ENCODE measurements at regions of chr9 and their contacts with region 1.

Region 1: GRCh38 chr9:133673258-133673655 is 37.1 kb downstream of the DBH start:
- DNase-seq: no peak
- H3K4me3 ChIP-seq: no peak overlapping the region
- H3K27ac ChIP-seq: no peak overlapping the region
- H3K4me1 ChIP-seq: no peaks in the 10 kb centered on the region
- H3K27me3 ChIP-seq: no peaks in the 10 kb centered on the region
- CTCF ChIP-seq: no peak

Region 2: DNA sequence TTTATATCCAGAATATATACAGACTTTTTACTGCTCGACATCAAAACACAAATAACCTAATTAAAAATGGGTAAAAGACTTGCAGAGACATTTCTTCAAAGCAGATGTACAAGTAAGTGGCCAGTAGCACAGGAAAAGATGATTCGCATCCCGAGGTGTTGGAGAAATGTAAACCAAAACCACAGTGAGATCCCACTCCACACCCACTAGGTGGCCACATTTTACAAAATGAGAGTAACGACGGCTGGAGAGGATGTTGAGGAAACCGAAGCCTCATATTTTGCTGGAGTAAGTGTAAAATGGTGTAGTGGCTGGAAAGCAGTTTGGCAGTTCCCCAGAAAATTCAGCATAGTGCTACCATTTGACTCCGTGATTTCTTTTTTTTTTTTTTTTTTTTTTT is 488.3 kb before region 1 on chr9:
- CTCF ChIA-PET with region 1: no interaction called
- dilution Hi-C with region 1: no loop called
- in situ Hi-C with region 1: no loop called
- intact Hi-C with region 1: no loop called
- DNase-seq: peak; percentile 75
- H3K4me3 ChIP-seq: no peak overlapping the region
- H3K27ac ChIP-seq: no peak overlapping the region
- H3K4me1 ChIP-seq: no peaks in the 10 kb centered on the region
- H3K27me3 ChIP-seq: peaks cover 2% of the 10 kb centered on the region
- CTCF ChIP-seq: peak; percentile 63 to 76

Region 3: GRCh38 chr9:133572821-133573361 is 100.4 kb before region 1 on chr9:
- CTCF ChIA-PET with region 1: no interaction called
- dilution Hi-C with region 1: no loop called
- in situ Hi-C with region 1: no loop called
- intact Hi-C with region 1: no loop called
- DNase-seq: no peak
- H3K4me3 ChIP-seq: no peak overlapping the region
- H3K27ac ChIP-seq: no peak overlapping the region
- H3K4me1 ChIP-seq: no peaks in the 10 kb centered on the region
- H3K27me3 ChIP-seq: peaks cover 5% of the 10 kb centered on the region
- CTCF ChIP-seq: no peak

Region 4: GRCh38 chr9:133584559-133585476 is 88.4 kb before region 1 on chr9:
- CTCF ChIA-PET with region 1: no interaction called
- dilution Hi-C with region 1: loop called (anchors 5 kb)
- in situ Hi-C with region 1: no loop called
- intact Hi-C with region 1: no loop called
- DNase-seq: no peak
- H3K4me3 ChIP-seq: no peak overlapping the region
- H3K27ac ChIP-seq: no peak overlapping the region
- H3K4me1 ChIP-seq: no peaks in the 10 kb centered on the region
- H3K27me3 ChIP-seq: peaks cover 3% of the 10 kb centered on the region
- CTCF ChIP-seq: no peak

Region 5: DNA sequence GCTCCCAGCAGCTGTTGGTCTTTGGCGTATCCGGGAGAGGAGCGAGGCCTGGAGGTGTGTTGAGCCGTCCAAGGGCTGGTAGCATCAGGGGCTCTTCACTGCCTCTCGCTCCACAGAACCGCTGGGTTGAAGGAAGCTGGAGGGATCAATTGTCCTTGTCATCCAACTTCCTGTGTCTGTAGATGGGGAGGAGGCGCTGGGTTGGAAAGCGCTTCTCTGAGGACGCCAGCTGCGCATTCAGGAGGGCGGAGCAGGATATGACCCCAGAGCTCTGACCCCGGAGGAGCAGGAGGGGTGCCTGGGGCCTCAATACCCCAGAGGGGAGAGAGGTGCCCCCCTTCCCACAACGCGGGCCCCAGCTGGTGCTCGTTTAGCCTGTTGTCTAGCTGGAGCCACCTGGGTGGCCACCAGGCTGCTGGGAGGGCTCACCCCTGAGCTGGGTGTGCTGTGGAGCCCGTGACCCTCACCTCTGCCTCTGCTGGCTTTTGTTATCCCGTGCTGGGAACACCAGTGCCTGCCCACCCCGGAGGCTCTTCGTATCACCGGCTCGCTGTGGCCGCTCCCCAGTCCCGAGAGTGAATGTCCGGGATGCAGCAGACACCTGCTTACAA is 39.1 kb before region 1 on chr9:
- CTCF ChIA-PET with region 1: no interaction called
- dilution Hi-C with region 1: no loop called
- in situ Hi-C with region 1: no loop called
- intact Hi-C with region 1: no loop called
- DNase-seq: no peak
- H3K4me3 ChIP-seq: no peak overlapping the region
- H3K27ac ChIP-seq: no peak overlapping the region
- H3K4me1 ChIP-seq: no peaks in the 10 kb centered on the region
- H3K27me3 ChIP-seq: no peaks in the 10 kb centered on the region
- CTCF ChIP-seq: no peak

Region 6: GRCh38 chr9:133683586-133684120 is 10.4 kb after region 1 on chr9:
- CTCF ChIA-PET with region 1: no interaction called
- dilution Hi-C with region 1: no loop called
- in situ Hi-C with region 1: no loop called
- intact Hi-C with region 1: no loop called
- DNase-seq: no peak
- H3K4me3 ChIP-seq: no peak overlapping the region
- H3K27ac ChIP-seq: no peak overlapping the region
- H3K4me1 ChIP-seq: no peaks in the 10 kb centered on the region
- H3K27me3 ChIP-seq: no peaks in the 10 kb centered on the region
- CTCF ChIP-seq: no peak

Region 7: GRCh38 chr9:133731876-133732638 is 58.8 kb after region 1 on chr9:
- CTCF ChIA-PET with region 1: no interaction called
- dilution Hi-C with region 1: loop called (anchors 5 kb)
- in situ Hi-C with region 1: no loop called
- intact Hi-C with region 1: no loop called
- DNase-seq: peak; percentile 21
- H3K4me3 ChIP-seq: no peak overlapping the region
- H3K27ac ChIP-seq: no peak overlapping the region
- H3K4me1 ChIP-seq: peaks cover under 1% of the 10 kb centered on the region
- H3K27me3 ChIP-seq: no peaks in the 10 kb centered on the region
- CTCF ChIP-seq: no peak

Region 8: DNA sequence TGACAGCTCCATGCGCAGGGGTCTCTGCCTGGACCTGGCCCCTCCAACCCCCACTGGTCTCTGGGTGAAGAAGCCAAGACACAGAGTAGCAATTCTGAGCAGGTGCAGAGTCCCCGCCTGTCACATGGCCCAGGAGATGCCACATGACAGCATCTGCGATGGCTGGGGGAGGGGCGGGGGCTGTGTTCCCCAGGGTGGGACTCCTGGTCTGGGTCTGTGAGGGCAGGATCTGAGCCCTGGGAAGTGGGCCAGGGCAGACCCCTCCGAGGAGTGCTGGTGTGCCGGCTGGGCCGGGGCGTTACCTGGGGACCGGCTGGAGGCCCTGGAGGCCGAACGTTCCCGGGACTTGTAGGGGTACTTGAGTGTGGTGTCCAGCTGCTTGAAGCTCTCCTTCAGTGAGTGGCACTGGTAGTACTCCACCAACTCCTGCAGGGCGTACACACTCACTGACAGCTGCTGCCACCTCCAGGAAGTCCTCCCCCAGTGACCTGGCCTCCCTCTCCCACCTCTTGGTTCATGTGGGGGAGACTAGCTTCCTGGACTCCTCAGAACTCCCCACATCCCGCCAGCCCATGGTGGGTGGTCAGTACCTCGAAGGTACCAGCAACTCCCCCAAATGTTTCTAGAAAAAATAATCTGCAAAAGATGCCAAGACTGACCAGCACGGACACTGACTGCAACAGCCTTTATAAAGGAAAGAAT is 97.0 kb after region 1 on chr9:
- CTCF ChIA-PET with region 1: no interaction called
- dilution Hi-C with region 1: loop called (anchors 5 kb)
- in situ Hi-C with region 1: no loop called
- intact Hi-C with region 1: no loop called
- DNase-seq: no peak
- H3K4me3 ChIP-seq: no peak overlapping the region
- H3K27ac ChIP-seq: no peak overlapping the region
- H3K4me1 ChIP-seq: no peaks in the 10 kb centered on the region
- H3K27me3 ChIP-seq: no peaks in the 10 kb centered on the region
- CTCF ChIP-seq: no peak